ENCODE measurements at regions of chr2 and their contacts with region 1.

Region 1: DNA sequence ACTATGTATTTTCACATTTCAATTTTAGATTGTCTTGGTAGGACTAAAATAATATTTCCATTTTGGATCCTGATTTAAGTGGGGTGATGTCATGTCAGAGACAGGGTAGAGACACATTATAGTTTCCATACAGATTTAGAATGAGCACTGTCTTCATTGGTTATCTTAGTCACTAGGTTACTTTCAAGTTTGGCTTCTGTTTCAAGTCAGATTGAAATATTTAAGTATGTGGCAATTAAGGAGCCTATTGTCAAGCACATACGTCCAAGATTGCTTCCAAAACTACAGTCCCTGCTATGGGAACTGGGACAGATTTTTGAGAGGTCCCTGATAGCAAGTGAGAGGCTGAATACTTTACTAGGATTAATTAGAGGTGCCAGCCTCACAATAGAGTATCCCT is 89.2 kb upstream of the FAM117B start:
- DNase-seq: no peak
- ATAC-seq: no peak
- H3K4me3 Mint-ChIP-seq: no peak overlapping the region
- H3K27ac Mint-ChIP-seq: no peak overlapping the region
- H3K4me1 Mint-ChIP-seq: no peaks in the 10 kb centered on the region
- H3K27me3 Mint-ChIP-seq: no peaks in the 10 kb centered on the region
- CTCF ChIP-seq: no peak

Region 2: GRCh38 chr2:202215179-202215578 is 330.3 kb before region 1 on chr2:
- CTCF ChIA-PET with region 1: no interaction called
- POLR2A ChIA-PET with region 1: no interaction called
- intact Hi-C with region 1: loop called (anchors 5 kb)
- DNase-seq: no peak
- ATAC-seq: no peak
- H3K4me3 Mint-ChIP-seq: no peak overlapping the region
- H3K27ac Mint-ChIP-seq: no peak overlapping the region
- H3K4me1 Mint-ChIP-seq: no peaks in the 10 kb centered on the region
- H3K27me3 Mint-ChIP-seq: no peaks in the 10 kb centered on the region
- CTCF ChIP-seq: no peak

Region 3: GRCh38 chr2:202510911-202511310 is 34.6 kb before region 1 on chr2:
- CTCF ChIA-PET with region 1: no interaction called
- POLR2A ChIA-PET with region 1: no interaction called
- intact Hi-C with region 1: no loop called
- DNase-seq: no peak
- ATAC-seq: no peak
- H3K4me3 Mint-ChIP-seq: no peak overlapping the region
- H3K27ac Mint-ChIP-seq: no peak overlapping the region
- H3K4me1 Mint-ChIP-seq: no peaks in the 10 kb centered on the region
- H3K27me3 Mint-ChIP-seq: no peaks in the 10 kb centered on the region
- CTCF ChIP-seq: no peak

Measured in activated B cell treated with CpG ODN at 0.5 μM for 24 hours (primary cell).